Dendritic cell treated with granulocyte-macrophage colony-stimulating factor and Interleukin-4, amounts not matched to agents 40 ng/mL and 50 ng/mL, for 4 days (primary cell): ENCODE measurements at regions of chr4 and their contacts with region 1.

Region 1: GRCh38 chr4:156939801-156940200 is 31.8 kb downstream of the PDGFC start:
- H3K4me3 Mint-ChIP-seq: no peak overlapping the region
- H3K27ac Mint-ChIP-seq: peak overlapping the region; percentile 84
- H3K4me1 Mint-ChIP-seq: peaks cover 27% of the 10 kb centered on the region
- H3K27me3 Mint-ChIP-seq: no peaks in the 10 kb centered on the region

Region 2: DNA sequence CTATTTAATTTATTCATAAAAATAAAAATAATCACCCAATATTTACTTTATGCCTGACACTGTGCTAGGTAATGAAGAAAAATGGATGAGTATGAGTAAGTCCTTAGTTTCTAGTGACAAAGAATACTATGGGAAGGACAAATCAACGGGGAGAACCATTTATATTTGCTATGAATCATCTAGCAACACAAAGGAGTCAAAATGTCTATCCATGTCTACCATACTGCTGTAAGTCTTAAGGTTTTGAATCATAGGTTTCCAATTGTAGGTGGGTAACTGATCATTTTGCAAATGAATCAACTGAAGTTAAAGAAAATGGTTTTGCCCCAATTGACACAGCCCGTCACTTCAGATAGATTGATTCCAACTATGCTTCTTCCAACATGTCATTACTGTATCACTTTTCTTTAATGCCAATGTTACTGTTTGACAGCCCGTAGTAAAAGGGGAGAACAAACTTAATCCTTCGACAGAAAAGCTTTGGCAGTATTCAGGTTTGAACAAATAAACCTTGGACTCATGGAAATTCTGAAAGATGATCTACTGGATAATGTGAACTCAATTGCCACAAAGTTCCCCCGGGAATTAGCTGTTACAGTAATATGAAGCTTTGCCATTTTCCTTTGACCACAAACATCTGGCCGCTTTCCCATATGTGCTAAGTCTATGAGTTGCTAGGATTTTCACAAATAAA is 1033.1 kb before region 1 on chr4:
- intact Hi-C with region 1: no loop called
- H3K4me3 Mint-ChIP-seq: no peak overlapping the region
- H3K27ac Mint-ChIP-seq: no peak overlapping the region
- H3K4me1 Mint-ChIP-seq: peaks cover 7% of the 10 kb centered on the region
- H3K27me3 Mint-ChIP-seq: no peaks in the 10 kb centered on the region

Region 3: DNA sequence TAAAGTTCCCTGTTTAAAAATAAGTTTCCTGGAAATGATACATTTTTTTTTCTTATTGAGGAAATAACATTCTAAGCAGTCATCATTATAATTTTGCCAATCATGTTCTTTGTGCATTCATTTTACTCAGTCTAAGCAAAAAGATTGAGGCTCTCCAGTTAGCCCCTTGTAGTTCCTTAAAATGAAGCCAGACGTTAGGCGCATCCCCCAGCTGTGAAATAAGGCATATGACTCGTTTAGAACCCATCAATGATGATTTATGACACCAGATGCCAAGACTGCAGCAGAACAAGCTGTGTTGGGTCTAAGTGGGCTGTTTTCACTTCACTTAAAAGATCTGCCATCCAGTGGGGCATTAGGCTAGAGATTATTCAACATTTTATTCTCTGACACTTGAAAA is 14.8 kb after region 1 on chr4:
- intact Hi-C with region 1: loop called (anchors 1 kb)
- H3K4me3 Mint-ChIP-seq: peak overlapping the region; percentile 21
- H3K27ac Mint-ChIP-seq: peak overlapping the region; percentile 93
- H3K4me1 Mint-ChIP-seq: peaks cover 65% of the 10 kb centered on the region
- H3K27me3 Mint-ChIP-seq: no peaks in the 10 kb centered on the region